ENCODE measurements at regions of chr19 and their contacts with region 1.

Region 1: DNA sequence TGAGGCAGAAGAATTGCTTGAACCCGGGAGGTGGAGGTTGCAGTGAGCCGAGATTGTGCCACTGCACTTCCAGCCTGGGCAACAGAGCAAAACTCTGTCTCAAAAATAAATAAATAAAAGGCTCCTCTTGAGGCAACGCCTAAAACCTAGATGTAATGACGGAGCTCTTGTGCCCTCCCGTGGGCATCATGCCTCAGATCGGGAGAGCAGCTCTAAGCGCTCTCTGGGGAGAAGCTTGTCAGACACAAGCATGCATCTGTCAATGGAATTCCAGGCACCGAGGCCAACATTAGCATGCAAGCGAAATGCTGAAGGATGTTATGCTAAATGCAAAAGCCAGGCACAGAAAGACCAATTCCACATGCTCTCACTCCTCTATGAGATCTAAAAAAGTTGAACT is 45.6 kb upstream of the MRI1 start:
- DNase-seq: no peak
- H3K4me3 ChIP-seq: no peak overlapping the region
- H3K27ac ChIP-seq: no peak overlapping the region
- H3K4me1 ChIP-seq: no peaks in the 10 kb centered on the region
- H3K27me3 ChIP-seq: no peaks in the 10 kb centered on the region
- CTCF ChIP-seq: peak in 1 of 2 donors; percentile 2
- POLR2A ChIP-seq: no peak

Region 2: DNA sequence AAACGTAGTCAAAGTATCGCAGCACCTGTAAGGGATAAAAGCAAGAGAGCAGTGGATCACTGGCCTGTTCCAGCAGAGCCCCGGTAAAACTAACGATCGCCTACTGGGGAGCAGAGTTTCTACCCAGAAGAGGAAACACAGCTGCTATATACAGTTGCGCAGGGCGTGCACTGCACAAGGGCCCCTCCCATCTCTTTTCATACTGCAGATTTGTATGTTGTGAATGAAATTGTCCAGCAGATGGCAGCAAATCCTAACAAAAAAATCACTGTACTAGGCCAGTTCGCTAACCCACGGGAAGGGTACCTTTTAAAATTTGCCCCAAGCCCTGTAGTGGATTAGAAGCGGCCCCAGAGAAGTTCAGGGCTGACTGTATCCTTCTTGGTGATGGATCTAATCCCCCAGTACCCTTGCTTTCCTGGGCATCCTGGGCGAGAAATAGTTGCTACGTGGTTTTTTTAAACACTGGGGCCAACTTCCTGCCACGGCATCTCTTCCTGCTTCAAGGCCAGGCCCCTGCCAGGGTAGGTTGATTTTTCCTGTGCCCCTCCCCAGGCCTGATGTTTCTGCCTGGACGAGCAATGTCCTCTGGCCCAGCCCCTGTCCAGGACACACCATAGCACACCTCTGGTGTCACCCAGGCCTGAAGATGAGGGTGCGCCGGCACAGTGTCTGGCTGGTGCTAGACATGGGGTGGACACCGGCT is 441.5 kb before region 1 on chr19:
- CTCF ChIA-PET with region 1: interaction called, 16 read pairs
- POLR2A ChIA-PET with region 1: no interaction called
- dilution Hi-C with region 1: no loop called
- intact Hi-C with region 1: loop called (anchors 1 kb)
- DNase-seq: peak; percentile 78
- H3K4me3 ChIP-seq: no peak overlapping the region
- H3K27ac ChIP-seq: peak overlapping the region; percentile 4
- H3K4me1 ChIP-seq: peaks cover 5% of the 10 kb centered on the region
- H3K27me3 ChIP-seq: no peaks in the 10 kb centered on the region
- CTCF ChIP-seq: peak; percentile 41 to 61
- POLR2A ChIP-seq: no peak

Region 3: DNA sequence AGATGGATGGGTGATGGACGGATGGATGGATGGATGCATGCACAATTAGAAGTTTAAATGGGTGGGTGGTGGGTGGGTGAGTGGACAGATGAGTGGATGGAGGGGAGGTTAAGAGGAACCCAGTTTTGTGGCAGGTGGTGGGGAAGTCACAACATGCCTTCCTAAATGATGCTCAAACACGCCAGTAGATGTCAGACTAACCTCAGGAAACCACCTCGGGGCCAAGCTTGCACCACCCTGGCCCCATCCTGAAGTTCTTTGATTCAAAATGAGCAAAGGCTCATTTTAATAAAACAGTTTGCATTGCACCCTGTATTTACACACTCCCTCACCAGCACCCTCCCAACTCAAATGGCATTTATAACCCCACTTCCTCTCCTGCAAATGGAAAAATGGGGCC is 121.1 kb before region 1 on chr19:
- CTCF ChIA-PET with region 1: interaction called, 124 read pairs
- POLR2A ChIA-PET with region 1: no interaction called
- dilution Hi-C with region 1: no loop called
- intact Hi-C with region 1: loop called (anchors 1 kb)
- DNase-seq: peak; percentile 66
- H3K4me3 ChIP-seq: no peak overlapping the region
- H3K27ac ChIP-seq: no peak overlapping the region
- H3K4me1 ChIP-seq: no peaks in the 10 kb centered on the region
- H3K27me3 ChIP-seq: no peaks in the 10 kb centered on the region
- CTCF ChIP-seq: peak; percentile 39 to 61
- POLR2A ChIP-seq: no peak

Region 4: GRCh38 chr19:13610039-13610691 is 108.6 kb before region 1 on chr19:
- CTCF ChIA-PET with region 1: interaction called, 26 read pairs
- POLR2A ChIA-PET with region 1: no interaction called
- dilution Hi-C with region 1: no loop called
- intact Hi-C with region 1: no loop called
- DNase-seq: no peak
- H3K4me3 ChIP-seq: no peak overlapping the region
- H3K27ac ChIP-seq: no peak overlapping the region
- H3K4me1 ChIP-seq: no peaks in the 10 kb centered on the region
- H3K27me3 ChIP-seq: no peaks in the 10 kb centered on the region
- CTCF ChIP-seq: no peak
- POLR2A ChIP-seq: no peak

Region 5: DNA sequence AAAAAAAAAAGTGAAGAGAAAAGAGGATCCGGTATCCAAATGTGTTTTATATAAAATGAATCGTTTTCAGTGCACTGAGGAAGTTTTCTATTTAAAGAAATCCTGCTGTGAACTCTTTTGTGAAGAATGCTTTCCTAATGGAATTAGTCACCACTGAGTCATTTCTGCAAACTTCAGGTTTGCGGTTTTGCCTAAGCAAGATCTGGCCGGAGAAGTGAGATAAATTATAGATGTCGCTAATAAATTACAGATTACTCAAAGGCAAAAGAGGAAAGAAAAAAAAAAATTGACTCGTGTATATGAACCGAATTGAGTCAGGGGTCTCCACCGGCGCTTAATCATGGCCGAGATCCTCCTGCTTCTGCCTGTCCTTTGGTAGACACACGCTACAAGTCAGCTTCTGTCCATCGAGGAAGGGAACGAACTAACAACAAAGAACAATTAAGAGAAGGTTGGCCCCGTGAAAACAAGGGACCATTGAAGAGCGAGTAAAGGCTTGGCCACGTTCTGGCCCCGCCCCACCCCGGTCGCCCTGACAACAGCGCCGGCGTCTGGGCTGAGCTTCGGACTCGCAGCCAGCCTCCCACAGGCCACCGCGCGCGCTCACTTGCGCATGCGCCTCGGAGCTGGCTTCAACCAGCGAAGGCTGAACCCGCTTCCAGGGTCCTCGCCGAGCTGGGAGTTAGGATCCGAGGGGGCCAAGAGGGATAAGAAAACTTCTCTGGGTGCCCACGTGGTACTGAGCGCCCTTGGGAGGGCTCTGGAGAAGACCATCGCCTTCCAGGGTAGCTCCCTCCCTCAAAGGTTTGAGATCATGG is 12.6 kb after region 1 on chr19:
- CTCF ChIA-PET with region 1: interaction called, 20 read pairs
- POLR2A ChIA-PET with region 1: no interaction called
- dilution Hi-C with region 1: no loop called
- intact Hi-C with region 1: no loop called
- DNase-seq: peak; percentile 97
- H3K4me3 ChIP-seq: peak overlapping the region; percentile 19 to 75 (median 39)
- H3K27ac ChIP-seq: peak overlapping the region; percentile 98
- H3K4me1 ChIP-seq: peaks cover 23% of the 10 kb centered on the region
- H3K27me3 ChIP-seq: no peaks in the 10 kb centered on the region
- CTCF ChIP-seq: no peak
- POLR2A ChIP-seq: peak; percentile 89

Region 6: GRCh38 chr19:13748169-13748828 is 29.6 kb after region 1 on chr19:
- CTCF ChIA-PET with region 1: interaction called, 16 read pairs
- POLR2A ChIA-PET with region 1: no interaction called
- dilution Hi-C with region 1: no loop called
- intact Hi-C with region 1: no loop called
- DNase-seq: peak; percentile 42
- H3K4me3 ChIP-seq: peak overlapping the region; percentile 85 to 93 (median 85)
- H3K27ac ChIP-seq: peak overlapping the region; percentile 82
- H3K4me1 ChIP-seq: peaks cover 13% of the 10 kb centered on the region
- H3K27me3 ChIP-seq: no peaks in the 10 kb centered on the region
- CTCF ChIP-seq: no peak
- POLR2A ChIP-seq: peak; percentile 61